Endothelial cell of umbilical vein (primary cell): ENCODE measurements at regions of chr1 and their contacts with region 1.

Region 1: GRCh38 chr1:174703309-174703708 is 255.5 kb downstream of the GPR52 start:
- DNase-seq: no peak
- H3K4me3 ChIP-seq: no peak overlapping the region
- H3K27ac ChIP-seq: no peak overlapping the region
- H3K4me1 ChIP-seq: no peaks in the 10 kb centered on the region
- H3K27me3 ChIP-seq: no peaks in the 10 kb centered on the region
- CTCF ChIP-seq: no peak
- POLR2A ChIP-seq: no peak

Region 2: DNA sequence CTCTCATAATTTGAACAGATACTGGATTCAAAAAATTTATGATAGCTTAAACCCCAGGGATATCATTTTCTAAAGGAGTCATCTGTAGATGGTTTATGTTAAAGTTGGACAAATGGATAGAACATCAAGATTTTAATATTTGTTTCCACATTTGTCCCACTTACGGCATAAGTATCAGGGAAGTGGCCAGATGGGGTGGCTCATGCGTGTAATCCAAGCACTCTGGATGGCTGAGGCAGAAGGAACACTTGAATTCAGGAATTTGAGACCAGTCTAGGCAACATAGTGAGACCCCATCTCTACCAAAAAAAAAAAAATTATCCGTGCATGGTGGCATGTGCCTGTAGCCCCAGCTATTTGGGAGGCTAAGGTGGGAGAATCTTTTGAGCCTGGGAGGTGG is 26.5 kb before region 1 on chr1:
- CTCF ChIA-PET with region 1: no interaction called
- POLR2A ChIA-PET with region 1: no interaction called
- dilution Hi-C with region 1: no loop called
- intact Hi-C with region 1: no loop called
- DNase-seq: no peak
- H3K4me3 ChIP-seq: no peak overlapping the region
- H3K27ac ChIP-seq: no peak overlapping the region
- H3K4me1 ChIP-seq: no peaks in the 10 kb centered on the region
- H3K27me3 ChIP-seq: no peaks in the 10 kb centered on the region
- CTCF ChIP-seq: no peak
- POLR2A ChIP-seq: no peak

Region 3: GRCh38 chr1:174690266-174690665 is 13.0 kb before region 1 on chr1:
- CTCF ChIA-PET with region 1: no interaction called
- POLR2A ChIA-PET with region 1: no interaction called
- dilution Hi-C with region 1: no loop called
- intact Hi-C with region 1: loop called (anchors 1 kb)
- DNase-seq: no peak
- H3K4me3 ChIP-seq: no peak overlapping the region
- H3K27ac ChIP-seq: no peak overlapping the region
- H3K4me1 ChIP-seq: no peaks in the 10 kb centered on the region
- H3K27me3 ChIP-seq: no peaks in the 10 kb centered on the region
- CTCF ChIP-seq: no peak
- POLR2A ChIP-seq: no peak